ENCODE measurements at regions of chr5 and their contacts with region 1.

Region 1: DNA sequence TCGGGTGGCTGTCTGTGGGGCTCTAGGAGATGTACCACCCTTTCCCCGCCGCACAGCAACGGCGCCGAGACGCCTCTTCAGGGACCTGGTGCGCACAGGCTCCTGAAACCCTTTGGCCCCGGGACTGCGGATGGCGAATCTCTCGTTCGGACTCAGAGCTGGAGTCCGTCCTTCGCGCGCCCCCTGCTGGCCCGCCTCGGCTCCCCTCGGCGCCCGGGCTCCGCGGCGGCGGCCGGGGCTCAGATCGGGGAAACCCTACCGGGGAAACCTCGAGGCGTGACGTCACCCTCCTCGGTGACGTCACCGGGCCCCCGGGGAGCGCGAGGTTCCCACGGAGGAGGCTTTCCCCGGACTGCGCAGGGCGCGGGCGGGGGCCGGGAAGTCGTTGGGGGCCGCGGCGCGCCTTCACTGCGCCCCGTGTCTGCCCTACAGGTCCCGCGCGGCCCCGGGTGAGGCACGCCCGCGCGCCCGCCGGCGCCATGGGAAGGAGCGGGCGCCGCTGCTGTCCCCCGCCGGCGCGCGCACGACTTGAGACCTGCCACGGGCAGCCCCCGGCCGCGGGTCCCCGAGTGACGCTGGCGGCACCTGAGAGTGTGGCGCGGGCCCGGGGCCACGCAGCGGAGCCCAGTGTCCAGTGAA is 7.9 kb downstream of the PRR7 start:
- DNase-seq: peak; percentile 96
- ATAC-seq: peak; percentile 47
- H3K4me3 Mint-ChIP-seq: peak overlapping the region; percentile 80
- H3K27ac Mint-ChIP-seq: no peak overlapping the region
- H3K4me1 Mint-ChIP-seq: peaks cover 27% of the 10 kb centered on the region
- H3K27me3 Mint-ChIP-seq: no peaks in the 10 kb centered on the region

Region 2: GRCh38 chr5:176870110-176870593 is 584.4 kb before region 1 on chr5:
- CTCF ChIA-PET with region 1: no interaction called
- POLR2A ChIA-PET with region 1: no interaction called
- intact Hi-C with region 1: no loop called
- DNase-seq: no peak
- ATAC-seq: no peak
- H3K4me3 Mint-ChIP-seq: no peak overlapping the region
- H3K27ac Mint-ChIP-seq: no peak overlapping the region
- H3K4me1 Mint-ChIP-seq: no peaks in the 10 kb centered on the region
- H3K27me3 Mint-ChIP-seq: peaks cover 16% of the 10 kb centered on the region

Region 3: GRCh38 chr5:177133091-177133852 is 321.2 kb before region 1 on chr5 and contains the start of gene NSD1:
- CTCF ChIA-PET with region 1: no interaction called
- POLR2A ChIA-PET with region 1: no interaction called
- intact Hi-C with region 1: loop called in 1 of 2 experiments (anchors 1 kb)
- DNase-seq: peak; percentile 95
- ATAC-seq: peak; percentile 81
- H3K4me3 Mint-ChIP-seq: peak within 1 kb of the TSS; percentile 91
- H3K27ac Mint-ChIP-seq: peak within 1 kb of the TSS; percentile 89
- H3K4me1 Mint-ChIP-seq: peaks cover 48% of the 10 kb centered on the region
- H3K27me3 Mint-ChIP-seq: no peaks in the 10 kb centered on the region
- total RNA-seq, gene NSD1: 65.6 to 68.2 TPM

Region 4: GRCh38 chr5:177311723-177312648 is 142.5 kb before region 1 on chr5 and contains the start of gene MXD3:
- CTCF ChIA-PET with region 1: interaction called, 18 read pairs
- POLR2A ChIA-PET with region 1: interaction called, 4 read pairs
- intact Hi-C with region 1: loop called (anchors 1 to 2 kb)
- DNase-seq: peak; percentile 99
- ATAC-seq: peak; percentile 88
- H3K4me3 Mint-ChIP-seq: peak within 1 kb of the TSS; percentile 85
- H3K27ac Mint-ChIP-seq: peak within 1 kb of the TSS; percentile 84
- H3K4me1 Mint-ChIP-seq: peaks cover 28% of the 10 kb centered on the region
- H3K27me3 Mint-ChIP-seq: no peaks in the 10 kb centered on the region
- total RNA-seq, gene MXD3: 21.3 to 27.2 TPM

Region 5: DNA sequence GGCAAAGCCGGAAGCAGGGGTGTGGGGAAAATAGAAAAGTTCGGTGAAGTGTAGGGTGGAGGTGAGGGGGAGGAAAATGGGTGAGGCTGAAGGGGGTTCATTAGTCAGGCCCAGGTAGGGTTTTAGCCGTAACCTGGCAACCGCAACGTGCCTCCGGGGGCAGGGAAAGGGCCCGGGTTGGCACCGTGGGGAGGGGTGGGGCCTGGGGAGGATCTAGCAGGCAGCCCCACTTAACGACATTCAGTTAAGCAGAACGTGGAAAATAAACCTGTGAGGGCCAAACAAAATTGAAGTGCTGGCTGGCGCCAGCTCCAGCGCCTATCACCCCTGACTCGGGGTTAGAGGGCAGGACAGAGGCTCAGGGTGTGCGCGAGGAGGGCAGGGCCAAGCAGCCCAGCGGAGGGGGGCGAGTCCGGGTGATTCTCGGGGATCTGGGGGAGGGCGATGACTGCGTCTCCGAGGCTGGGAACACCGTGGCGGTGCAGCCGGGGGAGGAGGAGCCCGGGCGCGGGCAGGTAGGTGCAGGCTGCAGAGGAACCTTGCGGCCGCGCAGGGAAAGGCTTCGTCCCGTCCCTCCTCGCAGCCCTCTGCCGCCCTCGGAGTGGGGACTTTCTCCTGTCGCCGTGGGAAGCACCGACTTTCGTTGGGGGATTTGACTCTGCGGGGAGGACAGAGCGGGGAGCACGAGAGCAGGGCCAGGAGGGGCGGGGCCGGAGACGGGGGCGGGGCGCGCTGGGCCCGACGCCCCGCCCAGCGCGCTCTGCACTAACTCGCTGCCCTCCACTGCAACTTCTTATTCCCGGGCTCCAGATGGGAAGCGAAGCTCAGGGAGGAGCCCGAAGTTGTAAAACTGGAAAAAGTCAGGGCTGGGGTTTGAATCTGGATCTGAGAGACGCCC is 91.7 kb before region 1 on chr5:
- CTCF ChIA-PET with region 1: interaction called, 6 read pairs
- POLR2A ChIA-PET with region 1: interaction called, 4 read pairs
- intact Hi-C with region 1: loop called in 1 of 2 experiments (anchors 2 kb)
- DNase-seq: peak; percentile 84
- ATAC-seq: peak; percentile 68
- H3K4me3 Mint-ChIP-seq: peak overlapping the region; percentile 67
- H3K27ac Mint-ChIP-seq: peak overlapping the region; percentile 82
- H3K4me1 Mint-ChIP-seq: peaks cover 74% of the 10 kb centered on the region
- H3K27me3 Mint-ChIP-seq: no peaks in the 10 kb centered on the region

Region 6: GRCh38 chr5:177412603-177413233 is 41.8 kb before region 1 on chr5:
- CTCF ChIA-PET with region 1: interaction called, 25 read pairs
- POLR2A ChIA-PET with region 1: no interaction called
- intact Hi-C with region 1: no loop called
- DNase-seq: peak; percentile 33
- ATAC-seq: peak; percentile 80
- H3K4me3 Mint-ChIP-seq: no peak overlapping the region
- H3K27ac Mint-ChIP-seq: peak overlapping the region; percentile 55
- H3K4me1 Mint-ChIP-seq: peaks cover 36% of the 10 kb centered on the region
- H3K27me3 Mint-ChIP-seq: no peaks in the 10 kb centered on the region

Region 7: DNA sequence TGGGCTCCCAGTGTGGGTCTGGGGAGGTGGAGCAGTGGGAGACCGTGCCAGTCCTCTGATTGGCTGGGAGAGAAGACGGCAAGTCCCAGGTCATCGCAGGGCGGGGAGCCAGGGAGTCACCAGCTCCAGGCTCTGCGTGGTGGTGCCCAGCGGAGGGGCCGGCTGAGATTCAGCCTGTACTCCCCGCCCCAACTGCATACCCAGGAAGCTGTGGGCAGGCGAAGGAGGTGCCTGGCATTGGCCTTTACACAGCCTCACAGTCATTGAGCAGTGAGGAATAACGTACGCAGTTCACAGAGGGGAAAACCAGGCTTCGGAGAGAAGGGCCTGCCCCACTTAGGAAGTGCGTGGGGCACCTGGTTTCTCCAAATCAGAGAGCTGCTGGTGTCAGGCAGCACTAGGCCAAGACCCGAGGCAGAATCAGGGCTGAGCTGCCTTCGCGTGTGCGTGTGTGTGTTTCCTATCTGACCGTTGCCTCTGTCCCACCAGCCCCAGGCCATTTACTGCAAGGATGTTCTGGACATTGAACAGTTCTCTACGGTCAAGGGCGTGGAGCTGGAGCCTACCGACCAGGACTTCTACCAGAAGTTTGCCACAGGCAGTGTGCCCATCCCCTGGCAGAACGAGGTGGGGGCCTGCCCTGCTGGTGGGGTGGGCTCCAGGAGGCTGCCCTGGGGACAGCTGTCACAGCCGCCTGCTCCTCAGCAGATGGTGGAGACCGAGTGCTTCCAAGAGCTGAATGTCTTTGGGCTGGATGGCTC is 14.1 kb before region 1 on chr5:
- CTCF ChIA-PET with region 1: interaction called, 49 read pairs
- POLR2A ChIA-PET with region 1: interaction called, 4 read pairs
- intact Hi-C with region 1: no loop called
- DNase-seq: peak; percentile 72
- ATAC-seq: peak; percentile 77
- H3K4me3 Mint-ChIP-seq: no peak overlapping the region
- H3K27ac Mint-ChIP-seq: peak overlapping the region; percentile 68
- H3K4me1 Mint-ChIP-seq: peaks cover 65% of the 10 kb centered on the region
- H3K27me3 Mint-ChIP-seq: no peaks in the 10 kb centered on the region

Region 8: GRCh38 chr5:177516604-177517568 is 62.4 kb after region 1 on chr5 and contains the start of gene DDX41:
- CTCF ChIA-PET with region 1: interaction called, 7 read pairs
- POLR2A ChIA-PET with region 1: no interaction called
- intact Hi-C with region 1: loop called in 1 of 2 experiments (anchors 1 kb)
- DNase-seq: peak; percentile 98
- ATAC-seq: peak; percentile 91
- H3K4me3 Mint-ChIP-seq: peak within 1 kb of the TSS; percentile 98
- H3K27ac Mint-ChIP-seq: peak within 1 kb of the TSS; percentile 96
- H3K4me1 Mint-ChIP-seq: peaks cover 48% of the 10 kb centered on the region
- H3K27me3 Mint-ChIP-seq: no peaks in the 10 kb centered on the region
- total RNA-seq, gene DDX41: 192 to 197 TPM